ENCODE measurements at regions of chr11 and their contacts with region 1.

Region 1: GRCh38 chr11:118435893-118436624 is at the start of gene KMT2A:
- DNase-seq: peak; percentile 95
- H3K4me3 Mint-ChIP-seq: peak within 1 kb of the TSS; percentile 91
- H3K27ac Mint-ChIP-seq: peak within 1 kb of the TSS; percentile 97
- H3K4me1 Mint-ChIP-seq: peaks cover 37% of the 10 kb centered on the region
- H3K27me3 Mint-ChIP-seq: no peaks in the 10 kb centered on the region
- total RNA-seq, gene KMT2A: 61.5 to 72.4 TPM

Region 2: GRCh38 chr11:118216621-118217481 is 219.2 kb before region 1 on chr11:
- CTCF ChIA-PET with region 1: no interaction called
- POLR2A ChIA-PET with region 1: no interaction called
- intact Hi-C with region 1: loop called (anchors 2 kb)
- DNase-seq: peak; percentile 78
- H3K4me3 Mint-ChIP-seq: peak overlapping the region; percentile 81
- H3K27ac Mint-ChIP-seq: peak overlapping the region; percentile 97
- H3K4me1 Mint-ChIP-seq: peaks cover 97% of the 10 kb centered on the region
- H3K27me3 Mint-ChIP-seq: no peaks in the 10 kb centered on the region

Region 3: DNA sequence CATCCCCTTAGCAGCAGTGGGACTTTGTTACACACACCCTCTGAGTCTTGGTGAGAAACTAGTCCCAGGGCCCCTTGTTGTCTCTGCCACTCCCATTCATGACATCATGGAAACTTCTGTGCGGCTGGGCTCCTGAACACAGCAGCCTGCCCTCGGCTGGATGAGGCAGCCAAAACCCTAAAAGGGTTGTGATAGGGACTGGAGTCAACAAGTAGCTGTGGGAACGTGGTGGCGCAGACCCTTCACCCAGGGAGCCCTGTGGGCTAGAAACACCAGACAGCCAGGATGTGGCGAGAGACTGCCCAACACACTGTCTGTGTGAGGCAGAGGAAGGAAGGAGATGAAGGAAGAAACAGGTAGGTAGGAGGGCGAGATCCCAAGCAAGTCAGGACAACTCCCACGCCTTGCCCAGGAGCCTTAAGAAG is 97.4 kb before region 1 on chr11:
- CTCF ChIA-PET with region 1: no interaction called
- POLR2A ChIA-PET with region 1: no interaction called
- intact Hi-C with region 1: loop called (anchors 2 kb)
- DNase-seq: peak; percentile 95
- H3K4me3 Mint-ChIP-seq: peak overlapping the region; percentile 82
- H3K27ac Mint-ChIP-seq: peak overlapping the region; percentile 98
- H3K4me1 Mint-ChIP-seq: peaks cover 48% of the 10 kb centered on the region
- H3K27me3 Mint-ChIP-seq: no peaks in the 10 kb centered on the region

Region 4: GRCh38 chr11:118401151-118401878 is 34.7 kb before region 1 on chr11 and contains the start of gene ATP5MG:
- CTCF ChIA-PET with region 1: interaction called, 5 read pairs
- POLR2A ChIA-PET with region 1: interaction called, 19 read pairs
- intact Hi-C with region 1: loop called (anchors 1 kb)
- DNase-seq: peak; percentile 95
- H3K4me3 Mint-ChIP-seq: peak within 1 kb of the TSS; percentile 97
- H3K27ac Mint-ChIP-seq: peak within 1 kb of the TSS; percentile 98
- H3K4me1 Mint-ChIP-seq: peaks cover 66% of the 10 kb centered on the region
- H3K27me3 Mint-ChIP-seq: no peaks in the 10 kb centered on the region
- total RNA-seq, gene ATP5MG: 298 to 306 TPM

Region 5: DNA sequence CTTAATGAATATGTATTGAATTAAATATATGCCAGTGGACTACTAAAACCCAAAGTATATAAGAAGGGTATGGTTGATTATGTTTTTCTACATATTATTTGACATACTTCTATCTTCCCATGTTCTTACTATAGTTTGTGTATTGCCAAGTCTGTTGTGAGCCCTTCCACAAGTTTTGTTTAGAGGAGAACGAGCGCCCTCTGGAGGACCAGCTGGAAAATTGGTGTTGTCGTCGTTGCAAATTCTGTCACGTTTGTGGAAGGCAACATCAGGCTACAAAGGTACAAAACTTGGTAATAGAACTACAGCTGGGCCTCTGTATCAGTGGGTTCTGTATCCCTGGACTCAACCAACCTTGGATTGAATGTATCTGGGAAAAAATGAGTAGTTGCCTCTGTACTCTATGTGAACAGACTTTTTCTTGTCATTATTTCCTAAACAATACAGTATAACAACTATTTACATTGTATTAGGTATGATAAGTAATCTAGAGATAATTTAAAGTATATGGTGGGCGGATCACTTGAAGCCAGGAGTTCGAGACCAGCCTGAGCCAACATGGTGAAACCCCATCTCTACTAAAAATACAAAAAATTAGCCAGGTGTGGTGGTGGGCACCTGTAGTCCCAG is 52.5 kb after region 1 on chr11:
- CTCF ChIA-PET with region 1: interaction called, 13 read pairs
- POLR2A ChIA-PET with region 1: no interaction called
- intact Hi-C with region 1: loop called (anchors 1 kb)
- DNase-seq: peak; percentile 86
- H3K4me3 Mint-ChIP-seq: no peak overlapping the region
- H3K27ac Mint-ChIP-seq: no peak overlapping the region
- H3K4me1 Mint-ChIP-seq: peaks cover 5% of the 10 kb centered on the region
- H3K27me3 Mint-ChIP-seq: no peaks in the 10 kb centered on the region

Region 6: GRCh38 chr11:118870396-118871345 is 434.6 kb after region 1 on chr11:
- CTCF ChIA-PET with region 1: no interaction called
- POLR2A ChIA-PET with region 1: no interaction called
- intact Hi-C with region 1: loop called (anchors 10 kb)
- DNase-seq: peak; percentile 73
- H3K4me3 Mint-ChIP-seq: peak overlapping the region; percentile 83
- H3K27ac Mint-ChIP-seq: peak overlapping the region; percentile 99
- H3K4me1 Mint-ChIP-seq: peaks cover 56% of the 10 kb centered on the region
- H3K27me3 Mint-ChIP-seq: no peaks in the 10 kb centered on the region